Mammary epithelial cell (primary cell): ENCODE measurements at regions of chr17 and their contacts with region 1.

Region 1: DNA sequence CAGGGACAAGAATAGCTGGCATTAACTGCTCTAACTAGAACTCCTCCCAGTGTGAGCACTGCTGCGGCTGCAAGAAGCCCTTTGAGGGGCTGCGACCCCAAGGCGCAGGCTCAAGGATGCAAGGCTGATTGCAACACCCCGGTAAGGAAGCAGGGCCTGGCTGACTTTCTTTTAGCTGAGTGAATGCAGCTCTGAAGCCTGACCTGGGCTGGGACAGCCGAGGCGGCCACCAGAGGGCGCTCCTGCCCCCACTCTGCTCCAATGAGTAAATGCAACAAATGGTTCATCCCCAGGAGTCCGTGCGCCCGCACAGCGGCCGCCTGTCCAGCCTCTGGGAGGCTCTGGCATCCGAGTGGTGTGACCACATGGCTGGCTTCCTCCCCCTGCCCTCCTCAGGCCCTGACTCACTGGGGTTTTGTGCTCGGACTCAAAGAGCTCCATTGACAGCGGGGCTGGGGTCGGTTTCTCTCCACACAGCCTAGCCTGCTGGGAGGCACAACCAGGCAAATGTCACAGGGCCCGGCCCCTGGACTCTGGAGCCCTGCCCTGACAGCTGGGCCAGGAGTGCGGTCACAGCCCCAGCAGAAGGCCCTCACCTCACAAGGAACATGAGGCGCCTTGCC is at the start of gene SMIM5:
- DNase-seq: peak; percentile 71
- H3K4me3 ChIP-seq: no peak within 1 kb of the TSS
- H3K27ac ChIP-seq: peak within 1 kb of the TSS; percentile 6
- H3K4me1 ChIP-seq: peaks cover 17% of the 10 kb centered on the region
- H3K27me3 ChIP-seq: no peaks in the 10 kb centered on the region
- CTCF ChIP-seq: peak; percentile 87 to 93
- total RNA-seq, gene SMIM5: not detected

Region 2: GRCh38 chr17:75652915-75653549 is 20.1 kb after region 1 on chr17:
- CTCF ChIA-PET with region 1: interaction called, 11 read pairs
- dilution Hi-C with region 1: no loop called
- in situ Hi-C with region 1: no loop called
- intact Hi-C with region 1: no loop called
- DNase-seq: no peak
- H3K4me3 ChIP-seq: no peak overlapping the region
- H3K27ac ChIP-seq: no peak overlapping the region
- H3K4me1 ChIP-seq: no peaks in the 10 kb centered on the region
- H3K27me3 ChIP-seq: no peaks in the 10 kb centered on the region
- CTCF ChIP-seq: peak; percentile 58 to 61

Region 3: GRCh38 chr17:75749545-75750389 is 116.8 kb after region 1 on chr17:
- CTCF ChIA-PET with region 1: interaction called, 3 read pairs
- dilution Hi-C with region 1: no loop called
- in situ Hi-C with region 1: no loop called
- intact Hi-C with region 1: loop called (anchors 2 kb)
- DNase-seq: no peak
- H3K4me3 ChIP-seq: no peak overlapping the region
- H3K27ac ChIP-seq: no peak overlapping the region
- H3K4me1 ChIP-seq: peaks cover 3% of the 10 kb centered on the region
- H3K27me3 ChIP-seq: no peaks in the 10 kb centered on the region
- CTCF ChIP-seq: peak; percentile 52 to 77